ENCODE measurements at regions of chr18 and their contacts with region 1.

Region 1: GRCh38 chr18:60044290-60045006 is 144.7 kb downstream of the PMAIP1 start:
- DNase-seq: peak; percentile 90
- ATAC-seq: peak; percentile 92
- H3K4me3 ChIP-seq: 0 out of 2 replicates have a peak overlapping the region, but pooled peaks have one; percentile 1
- H3K27ac ChIP-seq: peak overlapping the region; percentile 83
- H3K4me1 ChIP-seq: peaks cover 30% of the 10 kb centered on the region
- H3K27me3 ChIP-seq: no peaks in the 10 kb centered on the region
- CTCF ChIP-seq: no peak

Region 2: DNA sequence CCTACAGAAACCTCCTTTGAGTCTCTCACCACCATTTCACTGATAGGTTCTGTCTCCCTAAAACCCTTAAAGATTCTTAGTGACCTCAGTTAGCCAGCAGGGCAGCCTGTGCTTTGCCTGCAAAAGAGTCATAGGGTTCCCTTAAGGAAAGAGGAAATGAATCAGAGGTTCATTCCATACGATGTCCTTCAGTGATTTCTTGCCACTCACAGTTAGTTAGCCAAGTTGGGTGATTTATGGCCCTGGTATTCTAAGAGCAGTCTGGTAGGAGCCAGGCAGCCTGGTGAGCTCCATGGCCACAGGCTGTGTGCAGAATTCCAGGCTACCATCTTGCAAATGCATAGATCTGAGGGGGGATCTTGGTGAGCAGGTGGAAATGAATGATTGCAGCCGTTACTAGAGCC is 328.5 kb before region 1 on chr18:
- CTCF ChIA-PET with region 1: no interaction called
- POLR2A ChIA-PET with region 1: no interaction called
- intact Hi-C with region 1: no loop called
- DNase-seq: peak; percentile 95
- ATAC-seq: peak; percentile 78
- H3K4me3 ChIP-seq: no peak overlapping the region
- H3K27ac ChIP-seq: peak overlapping the region; percentile 23
- H3K4me1 ChIP-seq: peaks cover 56% of the 10 kb centered on the region
- H3K27me3 ChIP-seq: no peaks in the 10 kb centered on the region
- CTCF ChIP-seq: no peak

Region 3: DNA sequence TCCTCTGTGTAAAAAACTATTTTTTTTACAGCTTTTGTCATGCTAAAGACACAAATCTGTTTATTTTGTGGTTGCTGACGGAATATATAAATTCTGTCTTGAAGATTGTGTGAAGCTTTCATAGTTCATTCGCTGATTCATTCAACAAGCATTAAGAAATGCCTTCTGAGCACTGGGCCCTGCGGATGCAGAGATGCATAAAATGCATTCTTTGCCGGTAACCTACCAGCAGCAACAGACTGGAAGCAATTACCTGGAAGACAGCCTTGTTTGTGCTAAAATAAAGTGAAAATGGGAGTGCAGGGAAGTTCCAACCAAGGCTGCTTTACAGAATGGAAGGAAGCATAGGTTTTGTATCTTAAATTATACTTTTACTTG is 25.0 kb before region 1 on chr18:
- CTCF ChIA-PET with region 1: no interaction called
- POLR2A ChIA-PET with region 1: no interaction called
- intact Hi-C with region 1: loop called (anchors 1 kb)
- DNase-seq: peak; percentile 94
- ATAC-seq: peak; percentile 91
- H3K4me3 ChIP-seq: peak overlapping the region; percentile 46
- H3K27ac ChIP-seq: peak overlapping the region; percentile 89
- H3K4me1 ChIP-seq: peaks cover 26% of the 10 kb centered on the region
- H3K27me3 ChIP-seq: no peaks in the 10 kb centered on the region
- CTCF ChIP-seq: no peak

Region 4: DNA sequence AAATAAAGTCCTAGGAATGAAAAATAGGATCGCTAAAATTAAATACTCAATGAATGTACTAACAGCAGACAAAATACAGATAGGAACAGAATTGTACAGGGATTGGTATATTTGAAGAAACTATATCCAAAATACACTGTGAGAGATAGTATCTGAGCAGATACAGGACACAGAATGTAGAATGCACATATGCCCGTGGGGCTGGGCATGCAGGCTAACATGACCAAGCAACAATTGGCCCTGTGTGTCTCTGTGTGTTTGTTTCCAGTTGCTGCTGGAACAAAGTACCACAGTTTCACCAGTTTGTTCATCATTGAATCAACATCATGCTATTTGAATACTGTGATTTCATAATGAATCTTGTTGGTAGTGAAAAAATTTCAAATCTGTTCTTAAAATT is 17.1 kb before region 1 on chr18:
- CTCF ChIA-PET with region 1: no interaction called
- POLR2A ChIA-PET with region 1: interaction called, 5 read pairs
- intact Hi-C with region 1: loop called (anchors 2 kb)
- DNase-seq: peak; percentile 71
- ATAC-seq: peak; percentile 97
- H3K4me3 ChIP-seq: no peak overlapping the region
- H3K27ac ChIP-seq: peak overlapping the region; percentile 41
- H3K4me1 ChIP-seq: peaks cover 13% of the 10 kb centered on the region; the same call in 1 of the 2 replicates
- H3K27me3 ChIP-seq: no peaks in the 10 kb centered on the region
- CTCF ChIP-seq: no peak